MCF 10A (cell line): ENCODE measurements at regions of chr11 and their contacts with region 1.

Region 1: GRCh38 chr11:32176223-32176934 is 85.5 kb downstream of the RCN1 start:
- DNase-seq: peak; percentile 89
- H3K4me3 Mint-ChIP-seq: no peak overlapping the region
- H3K27ac Mint-ChIP-seq: no peak overlapping the region
- H3K4me1 Mint-ChIP-seq: no peaks in the 10 kb centered on the region
- H3K27me3 Mint-ChIP-seq: peaks cover 21% of the 10 kb centered on the region
- CTCF ChIP-seq: peak; percentile 86

Region 2: GRCh38 chr11:31107062-31107461 is 1069.3 kb before region 1 on chr11:
- CTCF ChIA-PET with region 1: interaction called, 13 read pairs
- POLR2A ChIA-PET with region 1: no interaction called
- intact Hi-C with region 1: loop called (anchors 1 kb)
- DNase-seq: peak; percentile 67
- H3K4me3 Mint-ChIP-seq: no peak overlapping the region
- H3K27ac Mint-ChIP-seq: no peak overlapping the region
- H3K4me1 Mint-ChIP-seq: no peaks in the 10 kb centered on the region
- H3K27me3 Mint-ChIP-seq: peaks cover 57% of the 10 kb centered on the region
- CTCF ChIP-seq: peak; percentile 49

Region 3: GRCh38 chr11:31397239-31397834 is 779.0 kb before region 1 on chr11:
- CTCF ChIA-PET with region 1: interaction called, 15 read pairs
- POLR2A ChIA-PET with region 1: no interaction called
- intact Hi-C with region 1: loop called (anchors 2 kb)
- DNase-seq: peak; percentile 31
- H3K4me3 Mint-ChIP-seq: no peak overlapping the region
- H3K27ac Mint-ChIP-seq: no peak overlapping the region
- H3K4me1 Mint-ChIP-seq: no peaks in the 10 kb centered on the region
- H3K27me3 Mint-ChIP-seq: no peaks in the 10 kb centered on the region
- CTCF ChIP-seq: peak; percentile 54

Region 4: GRCh38 chr11:31628111-31628510 is 548.3 kb before region 1 on chr11:
- CTCF ChIA-PET with region 1: no interaction called
- POLR2A ChIA-PET with region 1: no interaction called
- intact Hi-C with region 1: no loop called
- DNase-seq: no peak
- H3K4me3 Mint-ChIP-seq: no peak overlapping the region
- H3K27ac Mint-ChIP-seq: no peak overlapping the region
- H3K4me1 Mint-ChIP-seq: peaks cover 4% of the 10 kb centered on the region
- H3K27me3 Mint-ChIP-seq: no peaks in the 10 kb centered on the region
- CTCF ChIP-seq: no peak

Region 5: GRCh38 chr11:31870609-31871309 is 305.6 kb before region 1 on chr11:
- CTCF ChIA-PET with region 1: interaction called, 3 read pairs
- POLR2A ChIA-PET with region 1: no interaction called
- intact Hi-C with region 1: loop called (anchors 10 kb)
- DNase-seq: peak; percentile 66
- H3K4me3 Mint-ChIP-seq: no peak overlapping the region
- H3K27ac Mint-ChIP-seq: no peak overlapping the region
- H3K4me1 Mint-ChIP-seq: no peaks in the 10 kb centered on the region
- H3K27me3 Mint-ChIP-seq: peaks cover 11% of the 10 kb centered on the region
- CTCF ChIP-seq: peak; percentile 68

Region 6: DNA sequence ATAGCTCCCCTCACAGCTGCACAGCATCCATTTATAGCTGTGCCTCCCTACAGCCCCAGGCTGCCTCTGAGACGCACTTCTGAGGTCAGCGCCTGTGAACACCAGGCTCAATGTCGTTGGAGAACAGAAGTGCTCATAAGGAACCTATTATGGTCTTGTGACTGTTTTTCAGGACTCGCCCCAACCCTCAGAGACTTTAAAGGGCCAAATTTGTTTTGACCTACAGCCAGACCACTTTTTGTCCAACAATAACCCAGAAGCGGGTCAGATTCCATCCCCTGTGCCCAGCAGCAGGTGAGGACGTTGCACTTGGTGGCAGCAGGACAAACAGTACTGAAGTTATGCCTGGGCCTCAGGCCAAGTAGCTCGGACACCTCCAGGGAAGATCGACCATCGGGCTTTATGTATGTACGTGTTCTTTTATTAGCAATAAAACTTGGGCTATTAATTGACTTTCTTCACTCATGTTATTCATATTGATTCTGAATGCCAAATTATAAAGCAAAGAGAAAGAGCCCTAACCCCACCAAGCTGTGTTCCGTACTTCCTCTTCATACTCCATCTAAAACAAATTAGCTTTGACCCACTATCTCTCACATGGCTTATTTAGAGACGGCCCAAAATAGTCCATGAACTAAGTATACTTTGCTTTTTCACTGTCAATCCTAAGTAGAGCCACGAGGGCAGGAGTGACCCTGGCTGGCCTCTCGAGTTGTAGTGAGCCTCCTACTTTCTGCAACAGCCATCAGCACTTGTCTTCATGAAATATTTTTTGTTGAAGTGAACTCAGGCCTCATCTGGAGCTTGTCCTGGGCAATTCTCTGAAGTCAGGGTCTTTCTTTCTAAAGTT is 272.9 kb before region 1 on chr11:
- CTCF ChIA-PET with region 1: no interaction called
- POLR2A ChIA-PET with region 1: no interaction called
- intact Hi-C with region 1: no loop called
- DNase-seq: no peak
- H3K4me3 Mint-ChIP-seq: no peak overlapping the region
- H3K27ac Mint-ChIP-seq: no peak overlapping the region
- H3K4me1 Mint-ChIP-seq: no peaks in the 10 kb centered on the region
- H3K27me3 Mint-ChIP-seq: peaks cover 13% of the 10 kb centered on the region
- CTCF ChIP-seq: no peak

Region 7: GRCh38 chr11:32062540-32062939 is 113.8 kb before region 1 on chr11:
- CTCF ChIA-PET with region 1: interaction called, 21 read pairs
- POLR2A ChIA-PET with region 1: no interaction called
- intact Hi-C with region 1: no loop called
- DNase-seq: no peak
- H3K4me3 Mint-ChIP-seq: no peak overlapping the region
- H3K27ac Mint-ChIP-seq: no peak overlapping the region
- H3K4me1 Mint-ChIP-seq: no peaks in the 10 kb centered on the region
- H3K27me3 Mint-ChIP-seq: peaks cover 40% of the 10 kb centered on the region
- CTCF ChIP-seq: no peak

Region 8: GRCh38 chr11:32162351-32162750 is 14.0 kb before region 1 on chr11:
- CTCF ChIA-PET with region 1: interaction called, 58 read pairs
- POLR2A ChIA-PET with region 1: no interaction called
- intact Hi-C with region 1: no loop called
- DNase-seq: no peak
- H3K4me3 Mint-ChIP-seq: no peak overlapping the region
- H3K27ac Mint-ChIP-seq: no peak overlapping the region
- H3K4me1 Mint-ChIP-seq: no peaks in the 10 kb centered on the region
- H3K27me3 Mint-ChIP-seq: peaks cover 57% of the 10 kb centered on the region
- CTCF ChIP-seq: no peak

Region 9: GRCh38 chr11:32266601-32267000 is 90.2 kb after region 1 on chr11:
- CTCF ChIA-PET with region 1: no interaction called
- POLR2A ChIA-PET with region 1: no interaction called
- intact Hi-C with region 1: no loop called
- DNase-seq: no peak
- H3K4me3 Mint-ChIP-seq: no peak overlapping the region
- H3K27ac Mint-ChIP-seq: no peak overlapping the region
- H3K4me1 Mint-ChIP-seq: no peaks in the 10 kb centered on the region
- H3K27me3 Mint-ChIP-seq: peaks cover 23% of the 10 kb centered on the region
- CTCF ChIP-seq: no peak

Region 10: GRCh38 chr11:32297611-32298011 is 121.2 kb after region 1 on chr11:
- CTCF ChIA-PET with region 1: interaction called, 98 read pairs
- POLR2A ChIA-PET with region 1: interaction called, 4 read pairs
- intact Hi-C with region 1: loop called (anchors 1 kb)
- DNase-seq: peak; percentile 50
- H3K4me3 Mint-ChIP-seq: no peak overlapping the region
- H3K27ac Mint-ChIP-seq: no peak overlapping the region
- H3K4me1 Mint-ChIP-seq: no peaks in the 10 kb centered on the region
- H3K27me3 Mint-ChIP-seq: no peaks in the 10 kb centered on the region
- CTCF ChIP-seq: peak; percentile 39

Region 11: DNA sequence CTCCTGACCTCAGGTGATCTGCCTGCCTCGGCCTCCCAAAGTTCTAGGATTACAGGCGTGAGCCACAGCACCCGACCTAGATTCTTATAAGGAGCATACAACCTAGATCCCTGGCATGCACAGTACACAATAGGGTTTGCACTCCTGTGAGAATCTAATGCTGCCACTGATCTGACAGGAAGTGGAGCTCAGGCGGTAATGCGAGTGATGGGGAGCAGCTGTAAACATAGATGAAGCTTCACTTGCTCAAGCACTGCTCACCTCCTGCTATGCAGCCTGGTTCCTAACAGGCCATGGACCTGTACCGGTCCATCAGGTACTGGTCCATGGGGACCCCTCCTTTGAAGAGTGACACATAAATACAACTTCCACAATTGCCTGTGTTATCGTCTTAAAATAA is 362.4 kb after region 1 on chr11:
- CTCF ChIA-PET with region 1: no interaction called
- POLR2A ChIA-PET with region 1: no interaction called
- intact Hi-C with region 1: no loop called
- DNase-seq: no peak
- H3K4me3 Mint-ChIP-seq: no peak overlapping the region
- H3K27ac Mint-ChIP-seq: no peak overlapping the region
- H3K4me1 Mint-ChIP-seq: no peaks in the 10 kb centered on the region
- H3K27me3 Mint-ChIP-seq: no peaks in the 10 kb centered on the region
- CTCF ChIP-seq: no peak